Activated CD4-positive, alpha-beta memory T cell treated with anti-CD3 and anti-CD28 coated beads for 36 hours (primary cell): ENCODE measurements at regions of chr12 and their contacts with region 1.

Region 1: GRCh38 chr12:92218394-92219077 is 72.9 kb upstream of the BTG1 start:
- DNase-seq: no peak
- H3K4me3 Mint-ChIP-seq: no peak overlapping the region
- H3K27ac Mint-ChIP-seq: peak overlapping the region; percentile 74
- H3K4me1 Mint-ChIP-seq: peaks cover 23% of the 10 kb centered on the region
- H3K27me3 Mint-ChIP-seq: no peaks in the 10 kb centered on the region

Region 2: DNA sequence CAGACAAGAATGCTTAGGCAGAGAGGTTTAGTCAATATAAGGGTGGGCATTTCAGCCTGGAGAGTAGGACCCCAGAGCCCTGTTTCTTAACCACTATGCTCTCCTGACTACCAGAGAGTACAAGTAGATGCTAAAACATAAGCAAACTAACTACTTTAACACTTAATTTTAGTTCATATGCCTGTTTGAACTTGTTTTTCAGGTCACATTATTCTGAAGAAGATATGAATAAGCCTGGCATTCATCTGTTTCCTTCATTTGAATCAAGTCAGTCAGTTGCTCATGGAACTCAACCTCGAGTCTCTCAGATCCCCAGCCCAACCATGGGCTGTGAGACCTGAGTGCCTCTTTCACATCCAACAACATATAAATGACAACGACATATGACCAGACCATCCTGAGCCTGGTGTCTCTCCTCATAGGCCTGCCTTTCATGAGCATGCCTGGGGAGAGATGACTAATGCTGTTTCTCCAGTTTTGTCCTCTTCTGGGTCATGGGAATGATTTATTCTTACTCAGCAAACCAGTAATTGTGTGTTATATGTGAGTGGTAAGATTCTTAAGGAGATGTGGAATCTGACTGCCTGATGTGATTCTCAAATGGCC is 178.2 kb after region 1 on chr12:
- CTCF ChIA-PET with region 1: no interaction called
- POLR2A ChIA-PET with region 1: no interaction called
- intact Hi-C with region 1: loop called (anchors 2 kb)
- DNase-seq: peak; percentile 61
- H3K4me3 Mint-ChIP-seq: no peak overlapping the region
- H3K27ac Mint-ChIP-seq: peak overlapping the region; percentile 86
- H3K4me1 Mint-ChIP-seq: peaks cover 90% of the 10 kb centered on the region
- H3K27me3 Mint-ChIP-seq: no peaks in the 10 kb centered on the region

Region 3: GRCh38 chr12:92551853-92552397 is 333.4 kb after region 1 on chr12:
- CTCF ChIA-PET with region 1: no interaction called
- POLR2A ChIA-PET with region 1: no interaction called
- intact Hi-C with region 1: loop called (anchors 5 kb)
- DNase-seq: peak; percentile 75
- H3K4me3 Mint-ChIP-seq: no peak overlapping the region
- H3K27ac Mint-ChIP-seq: no peak overlapping the region
- H3K4me1 Mint-ChIP-seq: peaks cover 25% of the 10 kb centered on the region
- H3K27me3 Mint-ChIP-seq: no peaks in the 10 kb centered on the region